ENCODE measurements at regions of chr22 and their contacts with region 1.

Region 1: GRCh38 chr22:39170825-39171622 is 18.5 kb upstream of the CBX7 start:
- DNase-seq: peak; percentile 71 to 79 (median 76)
- ATAC-seq: peak; percentile 98
- H3K4me3 ChIP-seq: no peak overlapping the region
- H3K27ac ChIP-seq: no peak overlapping the region
- H3K4me1 ChIP-seq: peaks cover 12 to 23% of the 10 kb centered on the region in 2 experiments; a peak in 4 of 5 replicates
- H3K27me3 ChIP-seq: no peaks in the 10 kb centered on the region
- CTCF ChIP-seq: peak; percentile 80 to 93 (median 87)
- EP300 ChIP-seq: no peak
- POLR2A ChIP-seq: no peak
- RAD21 ChIP-seq: peak; percentile 88 to 96

Region 2: GRCh38 chr22:39138422-39138911 is 32.6 kb before region 1 on chr22:
- CTCF ChIA-PET with region 1: no interaction called
- POLR2A ChIA-PET with region 1: no interaction called
- in situ Hi-C with region 1: no loop called
- intact Hi-C with region 1: no loop called
- DNase-seq: no peak
- ATAC-seq: no peak
- H3K4me3 ChIP-seq: no peak overlapping the region
- H3K27ac ChIP-seq: no peak overlapping the region
- H3K4me1 ChIP-seq: peaks cover 0 to 18% of the 10 kb centered on the region in 2 experiments; a peak in 2 of 5 replicates
- H3K27me3 ChIP-seq: no peaks in the 10 kb centered on the region
- CTCF ChIP-seq: no peak
- EP300 ChIP-seq: no peak
- POLR2A ChIP-seq: no peak
- RAD21 ChIP-seq: no peak

Region 3: GRCh38 chr22:39502109-39502788 is 331.2 kb after region 1 on chr22 and contains the start of gene MIEF1:
- CTCF ChIA-PET with region 1: no interaction called
- POLR2A ChIA-PET with region 1: no interaction called
- in situ Hi-C with region 1: loop called (anchors 10 kb)
- intact Hi-C with region 1: no loop called
- DNase-seq: peak; percentile 88 to 97 (median 90)
- ATAC-seq: peak; percentile 95
- H3K4me3 ChIP-seq: peak within 1 kb of the TSS; percentile 96
- H3K27ac ChIP-seq: peak within 1 kb of the TSS; percentile 84
- H3K4me1 ChIP-seq: peaks cover 22 to 29% of the 10 kb centered on the region in 2 experiments
- H3K27me3 ChIP-seq: no peaks in the 10 kb centered on the region
- CTCF ChIP-seq: no peak
- EP300 ChIP-seq: no peak
- POLR2A ChIP-seq: peak; percentile 73
- RAD21 ChIP-seq: no peak
- polyA plus RNA-seq, gene MIEF1: 10.9 to 13.1 TPM

Region 4: GRCh38 chr22:40036591-40037225 is 865.7 kb after region 1 on chr22:
- CTCF ChIA-PET with region 1: no interaction called
- POLR2A ChIA-PET with region 1: no interaction called
- in situ Hi-C with region 1: loop called (anchors 10 kb)
- intact Hi-C with region 1: no loop called
- DNase-seq: peak; percentile 63 to 81 (median 69)
- ATAC-seq: peak; percentile 92
- H3K4me3 ChIP-seq: no peak overlapping the region
- H3K27ac ChIP-seq: no peak overlapping the region
- H3K4me1 ChIP-seq: peaks cover 0 to 25% of the 10 kb centered on the region in 2 experiments; a peak in 4 of 5 replicates
- H3K27me3 ChIP-seq: no peaks in the 10 kb centered on the region
- CTCF ChIP-seq: peak; percentile 80 to 86 (median 80)
- EP300 ChIP-seq: no peak
- POLR2A ChIP-seq: no peak
- RAD21 ChIP-seq: peak; percentile 87 to 88